ENCODE measurements at regions of chr9 and their contacts with region 1.

Region 1: GRCh38 chr9:37592108-37592951 is at the start of gene TOMM5:
- DNase-seq: peak; percentile 50 to 87
- H3K4me3 ChIP-seq: peak within 1 kb of the TSS; percentile 85 to 92 (median 86)
- H3K27ac ChIP-seq: no peak within 1 kb of the TSS
- H3K4me1 ChIP-seq: peaks cover 0 to 4% (median 1%) of the 10 kb centered on the region in 4 experiments; a peak in 3 of 7 replicates
- H3K27me3 ChIP-seq: peaks cover 1 to 10% (median 4%) of the 10 kb centered on the region in 4 experiments; a peak in 5 of 7 replicates
- CTCF ChIP-seq: no peak
- EP300 ChIP-seq: no peak
- POLR2A ChIP-seq: peak; percentile 51 to 90
- RAD21 ChIP-seq: no peak
- total RNA-seq, gene TOMM5: 160 and 174 TPM in 2 replicates

Region 2: DNA sequence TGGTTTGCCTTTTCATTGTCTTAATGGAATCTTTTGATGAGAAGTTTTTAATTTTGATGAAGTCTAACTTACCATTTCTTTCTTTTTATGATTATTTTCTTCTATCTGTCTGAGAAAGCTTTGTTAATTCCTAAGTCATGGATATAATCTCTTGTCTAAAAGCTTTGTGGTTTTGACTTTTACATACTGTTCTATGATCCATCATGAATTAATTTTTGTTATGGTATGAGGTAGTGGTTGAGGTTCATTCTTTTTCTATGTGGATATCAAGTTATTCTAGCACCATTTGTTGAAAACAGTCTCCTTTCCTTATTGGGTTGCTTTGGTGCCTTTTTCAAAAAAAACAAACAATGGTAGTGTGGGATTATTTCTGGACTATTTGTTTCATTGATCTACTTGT is 36.5 kb before region 1 on chr9:
- CTCF ChIA-PET with region 1: no interaction called
- POLR2A ChIA-PET with region 1: no interaction called
- DNase-seq: no peak
- H3K4me3 ChIP-seq: no peak overlapping the region
- H3K27ac ChIP-seq: no peak overlapping the region
- H3K4me1 ChIP-seq: peaks cover 0 to 8% (median 2%) of the 10 kb centered on the region in 4 experiments; a peak in 2 of 7 replicates
- H3K27me3 ChIP-seq: no peaks in the 10 kb centered on the region
- CTCF ChIP-seq: no peak
- EP300 ChIP-seq: no peak
- POLR2A ChIP-seq: no peak
- RAD21 ChIP-seq: no peak

Region 3: GRCh38 chr9:37575921-37576721 is 16.2 kb before region 1 on chr9 and contains the start of gene FBXO10:
- CTCF ChIA-PET with region 1: interaction called, 4 read pairs
- POLR2A ChIA-PET with region 1: interaction called, 52 read pairs
- DNase-seq: peak; percentile 34 to 85
- H3K4me3 ChIP-seq: peak within 1 kb of the TSS; percentile 69 to 91 (median 79)
- H3K27ac ChIP-seq: peak within 1 kb of the TSS; percentile 25; the same call in 1 of the 2 replicates
- H3K4me1 ChIP-seq: peaks cover 8 to 25% (median 18%) of the 10 kb centered on the region in 4 experiments
- H3K27me3 ChIP-seq: no peaks in the 10 kb centered on the region; a peak in 1 of 7 replicates
- CTCF ChIP-seq: no peak
- EP300 ChIP-seq: no peak
- POLR2A ChIP-seq: peak; percentile 62 to 64; a peak in 2 of 3 replicates
- RAD21 ChIP-seq: no peak; a peak in 1 of 4 replicates
- total RNA-seq, gene FBXO10: 13.1 and 15.4 TPM in 2 replicates